Motor neuron (in vitro differentiated cells): ENCODE measurements at regions of chr6 and their contacts with region 1.

Region 1: GRCh38 chr6:26122793-26123674 is 35.8 kb downstream of the HFE start:
- ATAC-seq: peak; percentile 22 to 73 (median 66)
- H3K4me3 ChIP-seq: peak overlapping the region; percentile 75 to 97 (median 88)
- H3K27ac ChIP-seq: peak overlapping the region; percentile 83 to 90
- H3K4me1 ChIP-seq: peaks cover 13 to 17% of the 10 kb centered on the region in 2 donors

Region 2: GRCh38 chr6:25263657-25264056 is 859.4 kb before region 1 on chr6:
- in situ Hi-C with region 1: no loop called
- ATAC-seq: peak in 4 of 8 experiments; percentile 22 to 69 (median 54)
- H3K4me3 ChIP-seq: no peak overlapping the region
- H3K27ac ChIP-seq: no peak overlapping the region
- H3K4me1 ChIP-seq: no peaks in the 10 kb centered on the region

Region 3: GRCh38 chr6:26196846-26197648 is 74.0 kb after region 1 on chr6:
- in situ Hi-C with region 1: loop called in 1 of 9 experiments (anchors 10 kb)
- ATAC-seq: peak; percentile 39 to 63 (median 54)
- H3K4me3 ChIP-seq: peak overlapping the region; percentile 62 to 96 (median 83)
- H3K27ac ChIP-seq: peak overlapping the region in 1 of 2 donors; percentile 12
- H3K4me1 ChIP-seq: peaks cover 0 to 10% of the 10 kb centered on the region in 2 donors